Left lung (tissue), 14 donors: ENCODE measurements at regions of chr6 and their contacts with region 1.

Region 1: GRCh38 chr6:157169656-157170055 is 153.7 kb downstream of the TMEM242 start:
- DNase-seq: no peak
- ATAC-seq: peak; percentile 70
- H3K4me3 ChIP-seq: no peak overlapping the region
- H3K27ac ChIP-seq: no peak overlapping the region
- H3K4me1 ChIP-seq: peaks cover 0 to 4% of the 10 kb centered on the region in 2 donors
- H3K27me3 ChIP-seq: no peaks in the 10 kb centered on the region
- CTCF ChIP-seq: no peak

Region 2: DNA sequence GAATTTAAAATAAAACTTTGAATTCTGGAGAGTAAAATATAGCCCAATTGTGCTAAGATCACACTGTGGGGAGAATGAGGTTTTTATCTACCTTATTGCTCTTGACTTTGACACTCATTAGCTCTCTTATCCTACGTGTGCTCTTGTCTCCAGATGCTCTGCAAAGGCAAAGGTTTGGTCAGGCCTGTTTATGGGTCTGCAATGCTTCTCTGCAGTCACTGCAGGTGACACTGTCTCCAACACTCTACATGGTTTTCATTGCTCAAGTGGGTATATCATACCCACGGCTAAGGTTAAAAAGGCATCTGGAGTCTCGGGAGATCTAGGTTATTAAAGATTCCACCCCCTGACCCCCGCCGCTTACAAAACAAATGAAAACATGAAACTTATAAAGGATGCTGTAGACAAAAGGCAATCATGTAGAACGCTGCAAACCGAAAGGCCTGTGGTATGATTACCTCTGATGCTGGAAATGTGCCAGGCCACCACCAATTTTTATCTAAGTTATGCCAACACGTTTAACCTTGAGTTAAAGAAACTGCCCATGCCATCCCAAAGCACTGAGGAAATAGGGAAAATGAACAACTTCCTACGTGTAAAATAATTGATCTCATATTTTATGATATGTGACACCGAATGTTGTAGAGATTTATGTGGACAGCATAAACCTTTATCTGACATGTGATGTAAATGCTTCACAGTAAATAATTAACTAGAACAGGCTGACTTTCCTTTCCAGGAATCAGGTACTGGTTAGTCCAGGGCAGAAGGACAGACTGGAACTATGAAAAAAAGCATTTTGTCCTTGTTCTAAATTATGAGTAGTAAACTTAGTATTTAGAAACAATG is 1475.9 kb before region 1 on chr6:
- intact Hi-C with region 1: loop called in 1 of 2 experiments (anchors 10 kb)
- DNase-seq: no peak
- ATAC-seq: peak; percentile 41
- H3K4me3 ChIP-seq: no peak overlapping the region
- H3K27ac ChIP-seq: no peak overlapping the region
- H3K4me1 ChIP-seq: no peaks in the 10 kb centered on the region
- H3K27me3 ChIP-seq: no peaks in the 10 kb centered on the region
- CTCF ChIP-seq: no peak

Region 3: DNA sequence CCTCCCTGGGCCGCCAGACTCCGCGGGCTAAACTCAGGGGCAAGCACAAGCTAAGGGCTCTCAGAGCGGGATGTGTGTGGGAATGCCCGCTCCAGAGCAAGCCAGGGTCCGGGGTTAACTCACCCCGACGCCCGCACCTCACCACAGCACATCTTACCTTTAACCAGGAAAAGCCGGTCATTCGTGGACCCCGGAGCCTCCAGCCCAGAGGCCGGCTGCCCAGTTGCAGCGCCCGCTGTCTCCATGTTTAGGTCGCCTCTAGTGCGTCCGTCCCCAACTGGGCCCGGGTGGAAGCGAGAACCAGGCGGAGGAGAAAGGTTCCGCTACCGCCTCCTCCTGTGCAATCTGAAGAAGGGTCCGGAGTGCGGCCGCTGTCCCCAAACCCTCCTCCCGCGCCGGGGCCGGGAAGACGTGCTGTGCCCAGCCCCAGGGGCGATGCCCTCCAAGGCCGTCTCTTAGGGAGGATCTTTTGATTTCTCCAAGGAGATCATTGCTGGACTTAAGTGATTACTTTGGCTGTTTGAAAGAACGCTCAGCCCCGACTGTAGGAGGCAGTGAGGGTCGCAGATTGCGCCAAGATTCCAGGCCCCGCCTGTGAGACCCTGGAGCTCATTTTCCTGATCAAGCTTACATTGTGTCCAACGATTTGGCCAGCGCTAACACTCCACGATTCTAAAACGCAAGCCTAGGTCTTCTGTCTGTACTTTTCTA is 153.8 kb after region 1 on chr6 and contains the start of gene TMEM242:
- intact Hi-C with region 1: no loop called
- DNase-seq: peak; percentile 91 to 96 (median 93)
- ATAC-seq: peak; percentile 99
- H3K4me3 ChIP-seq: peak within 1 kb of the TSS; percentile 58
- H3K27ac ChIP-seq: peak within 1 kb of the TSS; percentile 87 to 92
- H3K4me1 ChIP-seq: peaks cover 5 to 19% of the 10 kb centered on the region in 2 donors
- H3K27me3 ChIP-seq: peaks cover 0 to 14% of the 10 kb centered on the region in 2 donors
- CTCF ChIP-seq: peak in 1 of 2 donors; percentile 16
- polyA plus RNA-seq, gene TMEM242: 11.8 to 15.2 (median 13.2) TPM

Region 4: DNA sequence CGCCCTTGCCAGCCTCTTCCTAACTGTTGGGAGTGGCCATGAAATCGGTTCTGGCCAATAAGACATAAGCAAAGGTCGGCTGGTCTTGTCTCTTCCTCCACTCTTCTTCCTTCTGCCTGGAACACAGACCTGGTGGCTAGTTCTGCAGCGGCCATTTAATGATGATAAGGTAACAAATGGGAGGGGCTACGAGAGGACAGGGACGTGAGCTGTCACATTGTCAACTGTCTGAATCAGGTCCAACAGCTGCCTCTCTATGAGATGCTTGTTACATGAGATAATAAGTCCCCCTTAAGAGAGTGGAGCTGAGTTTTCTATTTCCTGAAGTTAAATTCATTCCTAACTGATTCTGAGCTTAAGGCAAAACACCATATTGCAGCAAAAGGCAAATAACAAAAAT is 166.2 kb after region 1 on chr6:
- intact Hi-C with region 1: no loop called
- DNase-seq: no peak
- ATAC-seq: no peak
- H3K4me3 ChIP-seq: no peak overlapping the region
- H3K27ac ChIP-seq: no peak overlapping the region
- H3K4me1 ChIP-seq: no peaks in the 10 kb centered on the region
- H3K27me3 ChIP-seq: peaks cover 0 to 16% of the 10 kb centered on the region in 2 donors
- CTCF ChIP-seq: no peak

Region 5: GRCh38 chr6:157379656-157380454 is 210.2 kb after region 1 on chr6:
- intact Hi-C with region 1: no loop called
- DNase-seq: peak; percentile 87 to 94 (median 92)
- ATAC-seq: peak; percentile 93
- H3K4me3 ChIP-seq: peak overlapping the region; percentile 70 to 96
- H3K27ac ChIP-seq: peak overlapping the region; percentile 91 to 92
- H3K4me1 ChIP-seq: peaks cover 11 to 20% of the 10 kb centered on the region in 2 donors
- H3K27me3 ChIP-seq: no peaks in the 10 kb centered on the region
- CTCF ChIP-seq: no peak